Mammary epithelial cell (primary cell): ENCODE measurements at regions of chr17 and their contacts with region 1.

Region 1: DNA sequence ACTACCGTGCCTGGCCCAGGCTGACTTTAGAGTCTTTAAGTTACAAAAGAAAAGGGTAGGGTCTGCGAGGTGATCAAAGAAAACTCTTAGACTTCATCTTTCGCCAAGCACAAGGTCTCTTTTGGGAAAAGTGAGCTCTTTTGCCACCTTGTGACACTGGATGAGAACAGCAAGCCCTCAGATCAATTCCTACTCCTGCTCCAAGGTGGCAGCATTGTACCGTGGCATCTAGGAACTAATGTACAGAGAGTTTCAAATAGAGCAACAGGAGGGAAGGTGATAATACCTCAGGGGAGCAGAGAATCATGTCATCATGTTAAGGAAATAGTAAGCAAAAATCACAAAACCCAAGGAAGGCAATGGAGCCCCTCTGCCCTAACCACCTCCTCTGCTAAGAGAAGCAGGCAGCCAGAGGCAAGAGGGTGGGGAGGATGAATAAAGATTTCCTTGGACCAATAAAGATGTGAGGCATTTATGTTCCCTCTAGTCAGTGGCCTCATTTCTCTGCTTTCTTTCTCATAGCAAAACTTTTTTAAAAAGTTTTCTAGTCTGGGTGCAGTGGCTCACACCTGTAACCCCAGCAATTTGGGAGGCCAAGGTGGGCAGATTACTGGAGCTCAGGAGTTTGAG is 2.1 kb upstream of the C17orf78 start:
- DNase-seq: peak; percentile 78
- H3K4me3 ChIP-seq: no peak overlapping the region
- H3K27ac ChIP-seq: no peak overlapping the region
- H3K4me1 ChIP-seq: peaks cover 6% of the 10 kb centered on the region
- H3K27me3 ChIP-seq: no peaks in the 10 kb centered on the region
- CTCF ChIP-seq: peak; percentile 100

Region 2: DNA sequence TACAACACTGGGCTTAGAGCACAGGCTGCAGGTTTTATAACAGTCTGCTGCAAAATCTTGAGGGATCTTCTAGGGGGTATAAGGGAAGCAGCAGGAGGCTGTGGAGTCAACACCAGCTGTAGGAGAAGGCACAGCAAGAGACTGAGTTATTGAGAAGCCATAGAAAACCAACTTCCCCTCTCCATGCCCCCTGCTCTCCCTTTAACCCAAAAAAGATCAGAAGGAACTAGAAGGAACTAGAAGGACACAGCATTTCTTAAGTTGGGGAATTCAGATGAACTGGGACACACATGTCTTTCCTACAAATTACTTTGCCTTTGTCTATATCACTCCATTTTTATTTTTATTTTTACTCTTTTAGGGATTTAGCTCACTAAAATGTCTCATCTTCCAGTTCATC is 1315.7 kb before region 1 on chr17:
- CTCF ChIA-PET with region 1: no interaction called
- dilution Hi-C with region 1: no loop called
- in situ Hi-C with region 1: no loop called
- intact Hi-C with region 1: no loop called
- DNase-seq: no peak
- H3K4me3 ChIP-seq: no peak overlapping the region
- H3K27ac ChIP-seq: no peak overlapping the region
- H3K4me1 ChIP-seq: no peaks in the 10 kb centered on the region
- H3K27me3 ChIP-seq: no peaks in the 10 kb centered on the region
- CTCF ChIP-seq: no peak

Region 3: GRCh38 chr17:36601303-36602029 is 772.2 kb before region 1 on chr17 and contains the start of gene MRM1:
- CTCF ChIA-PET with region 1: no interaction called
- dilution Hi-C with region 1: no loop called
- in situ Hi-C with region 1: no loop called
- intact Hi-C with region 1: loop called (anchors 1 kb)
- DNase-seq: peak; percentile 89
- H3K4me3 ChIP-seq: peak within 1 kb of the TSS; percentile 73 to 90 (median 84)
- H3K27ac ChIP-seq: peak within 1 kb of the TSS; percentile 69
- H3K4me1 ChIP-seq: peaks cover 13% of the 10 kb centered on the region
- H3K27me3 ChIP-seq: no peaks in the 10 kb centered on the region
- CTCF ChIP-seq: peak in 1 of 2 donors; percentile 23
- total RNA-seq, gene MRM1: 4.3 to 10.1 TPM

Region 4: DNA sequence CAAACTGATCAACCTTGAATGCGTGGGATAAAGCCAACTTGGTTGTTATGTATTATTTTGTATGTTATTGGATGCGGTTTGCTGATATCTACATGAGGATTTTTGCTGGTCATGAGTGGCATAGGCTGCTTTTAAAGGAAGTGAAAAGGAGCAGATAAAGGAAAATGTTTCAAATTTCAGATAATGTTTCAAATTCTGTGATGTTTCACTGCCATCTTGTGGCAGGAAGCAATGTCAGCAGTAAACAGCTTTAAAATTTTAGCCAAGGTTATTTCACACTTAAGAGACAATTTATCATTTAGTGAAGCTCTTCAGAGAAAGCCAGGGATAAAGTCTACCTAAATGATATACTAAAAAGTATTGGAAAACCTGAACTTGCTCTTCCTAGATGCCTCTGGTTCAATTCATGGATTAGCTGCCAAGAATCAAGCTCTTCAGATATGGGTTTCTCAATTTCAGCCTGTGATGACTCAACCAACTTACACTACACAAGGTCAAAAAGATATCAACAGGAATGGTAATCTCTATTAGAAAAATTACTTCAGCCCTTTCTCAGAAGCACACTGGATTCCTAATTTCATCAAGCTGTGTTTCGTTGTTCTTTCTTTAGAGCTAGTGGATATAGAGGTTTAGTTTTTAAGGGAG is 133.8 kb before region 1 on chr17:
- CTCF ChIA-PET with region 1: interaction called, 7 read pairs
- dilution Hi-C with region 1: no loop called
- in situ Hi-C with region 1: no loop called
- intact Hi-C with region 1: loop called (anchors 5 kb)
- DNase-seq: no peak
- H3K4me3 ChIP-seq: no peak overlapping the region
- H3K27ac ChIP-seq: no peak overlapping the region
- H3K4me1 ChIP-seq: no peaks in the 10 kb centered on the region
- H3K27me3 ChIP-seq: no peaks in the 10 kb centered on the region
- CTCF ChIP-seq: peak; percentile 61 to 67

Region 5: DNA sequence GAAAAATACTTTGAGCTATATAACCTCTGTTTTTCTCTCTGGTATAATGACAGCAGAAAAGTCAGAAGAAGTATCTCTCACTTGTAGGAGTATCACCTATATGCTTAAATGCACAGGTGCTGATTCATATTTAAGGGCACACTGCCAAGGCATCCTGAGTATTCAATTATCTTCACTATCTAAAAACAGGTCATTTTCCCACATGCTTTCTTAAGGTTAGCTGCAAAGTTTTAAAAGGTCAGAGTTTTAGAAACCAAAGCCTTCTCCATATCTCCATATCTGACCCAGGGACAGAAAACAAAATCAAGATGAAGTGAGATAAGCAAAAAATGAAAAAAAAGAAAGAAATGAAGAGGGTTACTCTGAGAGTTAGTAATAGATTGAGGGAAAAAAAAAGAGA is 97.1 kb before region 1 on chr17:
- CTCF ChIA-PET with region 1: interaction called, 3 read pairs
- dilution Hi-C with region 1: no loop called
- in situ Hi-C with region 1: no loop called
- intact Hi-C with region 1: loop called (anchors 5 kb)
- DNase-seq: peak; percentile 66
- H3K4me3 ChIP-seq: no peak overlapping the region
- H3K27ac ChIP-seq: no peak overlapping the region
- H3K4me1 ChIP-seq: peaks cover 3% of the 10 kb centered on the region
- H3K27me3 ChIP-seq: no peaks in the 10 kb centered on the region
- CTCF ChIP-seq: no peak

Region 6: GRCh38 chr17:37388266-37388665 is 14.6 kb after region 1 on chr17:
- CTCF ChIA-PET with region 1: no interaction called
- dilution Hi-C with region 1: no loop called
- in situ Hi-C with region 1: no loop called
- intact Hi-C with region 1: no loop called
- DNase-seq: peak; percentile 40
- H3K4me3 ChIP-seq: no peak overlapping the region
- H3K27ac ChIP-seq: no peak overlapping the region
- H3K4me1 ChIP-seq: no peaks in the 10 kb centered on the region
- H3K27me3 ChIP-seq: no peaks in the 10 kb centered on the region
- CTCF ChIP-seq: no peak

Region 7: DNA sequence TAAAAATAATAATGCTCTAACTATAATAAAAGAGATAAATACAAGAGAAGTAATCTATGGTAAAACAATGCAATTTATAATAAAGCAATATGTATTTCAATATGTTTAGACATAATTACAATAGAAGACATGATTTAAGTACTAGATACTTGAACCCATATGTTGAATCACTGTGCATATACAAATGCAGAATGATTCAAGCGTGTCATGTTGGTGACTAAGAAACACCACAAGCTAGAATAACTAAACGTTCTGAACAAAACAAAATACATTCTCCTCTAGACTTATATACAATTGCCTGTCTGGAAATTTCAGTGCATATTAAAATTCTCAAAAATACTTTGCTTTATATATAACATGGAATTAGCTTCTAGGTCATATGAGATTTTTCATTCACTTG is 44.2 kb after region 1 on chr17:
- CTCF ChIA-PET with region 1: no interaction called
- dilution Hi-C with region 1: no loop called
- in situ Hi-C with region 1: no loop called
- intact Hi-C with region 1: no loop called
- DNase-seq: no peak
- H3K4me3 ChIP-seq: no peak overlapping the region
- H3K27ac ChIP-seq: no peak overlapping the region
- H3K4me1 ChIP-seq: no peaks in the 10 kb centered on the region
- H3K27me3 ChIP-seq: no peaks in the 10 kb centered on the region
- CTCF ChIP-seq: no peak

Region 8: DNA sequence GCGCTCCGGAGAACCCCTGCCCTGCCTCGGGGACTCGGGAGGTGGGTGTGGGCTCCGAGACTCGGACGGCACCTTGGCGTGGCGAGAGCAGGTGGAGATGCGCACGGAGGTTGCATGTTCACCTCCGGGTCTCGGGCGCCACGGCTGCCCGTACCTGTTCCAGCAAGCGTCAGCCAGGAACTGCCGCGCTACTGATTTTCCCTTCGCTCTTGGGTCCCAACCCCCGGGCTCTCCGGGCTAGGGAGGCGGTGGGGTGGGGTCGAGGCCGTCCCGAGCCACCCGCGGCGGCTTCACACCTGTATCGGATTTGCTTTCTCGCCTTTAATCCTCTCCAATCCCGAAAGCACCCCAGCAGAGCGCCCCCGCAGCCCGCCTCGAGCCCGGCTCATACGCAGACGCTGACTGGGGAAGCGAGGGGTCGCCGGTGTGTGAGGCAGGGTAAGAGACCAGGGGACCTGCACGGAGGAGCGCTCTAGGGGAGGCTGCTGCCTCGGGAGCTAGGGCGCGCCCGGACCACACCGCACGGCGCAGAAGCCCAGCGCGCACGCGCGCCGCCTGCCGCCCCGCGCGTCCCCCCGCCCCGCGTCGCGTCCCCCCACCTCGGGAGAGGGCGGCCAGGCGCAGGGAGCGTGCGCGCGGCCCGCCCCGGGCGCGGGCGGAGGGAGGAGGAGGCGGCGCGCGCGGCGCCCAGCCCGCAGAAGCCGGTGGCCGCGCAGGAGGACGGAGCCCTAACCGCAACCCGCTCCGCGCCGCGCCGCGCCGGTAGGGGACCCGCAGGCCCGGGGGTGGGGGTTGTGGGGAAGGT is 115.8 kb after region 1 on chr17 and contains the start of gene DUSP14:
- CTCF ChIA-PET with region 1: interaction called, 3 read pairs
- dilution Hi-C with region 1: no loop called
- in situ Hi-C with region 1: no loop called
- intact Hi-C with region 1: loop called (anchors 2 kb)
- DNase-seq: peak; percentile 70
- H3K4me3 ChIP-seq: peak within 1 kb of the TSS; percentile 82 to 86 (median 82)
- H3K27ac ChIP-seq: peak within 1 kb of the TSS; percentile 95
- H3K4me1 ChIP-seq: peaks cover 24% of the 10 kb centered on the region
- H3K27me3 ChIP-seq: no peaks in the 10 kb centered on the region
- CTCF ChIP-seq: peak in 1 of 2 donors; percentile 5
- total RNA-seq, gene DUSP14: 121 to 148 TPM

Region 9: DNA sequence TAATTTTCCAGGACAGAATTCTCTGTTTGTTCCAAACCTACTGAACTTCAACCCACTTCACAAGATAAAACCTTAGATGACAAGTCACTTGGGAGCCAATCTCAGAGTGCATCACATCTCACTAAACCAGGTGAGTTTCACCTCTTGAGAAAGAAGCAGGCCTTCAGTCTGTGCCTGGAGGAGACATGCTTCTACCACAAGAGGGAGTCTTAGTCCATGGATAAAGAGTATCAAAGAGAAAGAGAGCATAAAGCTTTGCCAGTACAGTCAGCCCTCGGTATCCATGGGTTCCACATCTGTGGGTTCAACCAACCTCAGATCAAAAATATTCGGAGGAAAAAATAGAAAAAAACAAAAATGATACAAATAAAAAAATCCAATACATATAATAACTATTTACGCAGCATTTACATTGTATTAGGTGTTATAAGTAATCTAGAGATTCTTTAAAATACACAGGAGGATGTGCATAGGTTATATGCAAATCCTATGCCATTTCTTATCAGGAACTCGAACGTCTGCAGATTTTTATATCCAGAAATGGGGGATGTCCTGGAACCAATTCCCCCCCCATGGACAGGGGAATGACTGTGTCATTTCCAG is 153.7 kb after region 1 on chr17:
- CTCF ChIA-PET with region 1: interaction called, 13 read pairs
- dilution Hi-C with region 1: no loop called
- in situ Hi-C with region 1: loop called in 1 of 2 experiments (anchors 25 kb)
- intact Hi-C with region 1: loop called (anchors 1 kb)
- DNase-seq: peak; percentile 66
- H3K4me3 ChIP-seq: no peak overlapping the region
- H3K27ac ChIP-seq: no peak overlapping the region
- H3K4me1 ChIP-seq: no peaks in the 10 kb centered on the region
- H3K27me3 ChIP-seq: no peaks in the 10 kb centered on the region
- CTCF ChIP-seq: peak; percentile 82 to 84

Region 10: DNA sequence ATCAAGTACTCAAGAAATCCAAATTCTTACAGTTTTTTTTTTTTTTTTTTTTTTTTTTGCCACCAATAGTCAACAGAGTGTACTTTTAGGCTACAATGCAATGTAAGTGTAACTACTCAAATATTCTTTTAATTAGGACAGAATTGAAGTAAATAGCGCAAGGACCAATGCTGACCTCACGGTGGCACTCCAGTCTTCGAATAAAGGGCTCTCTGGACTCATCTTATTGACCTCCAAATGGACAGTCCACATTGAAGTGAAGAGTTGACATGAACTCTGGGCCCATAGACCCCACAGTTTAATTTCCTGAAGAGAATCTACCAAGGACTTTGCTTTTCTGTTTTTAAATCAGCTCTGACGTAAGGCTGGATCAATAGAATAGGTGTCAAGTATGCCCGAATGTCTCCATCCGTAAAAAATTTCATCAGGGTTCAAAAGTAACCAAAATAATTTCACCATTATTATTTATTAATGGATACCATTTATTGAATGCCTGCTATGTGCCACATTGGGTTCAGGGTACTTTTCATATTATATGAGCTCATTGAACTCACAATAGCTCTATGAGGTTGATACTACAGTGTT is 276.9 kb after region 1 on chr17:
- CTCF ChIA-PET with region 1: interaction called, 24 read pairs
- dilution Hi-C with region 1: no loop called
- in situ Hi-C with region 1: no loop called
- intact Hi-C with region 1: no loop called
- DNase-seq: peak; percentile 30
- H3K4me3 ChIP-seq: no peak overlapping the region
- H3K27ac ChIP-seq: no peak overlapping the region
- H3K4me1 ChIP-seq: peaks cover 3% of the 10 kb centered on the region
- H3K27me3 ChIP-seq: no peaks in the 10 kb centered on the region
- CTCF ChIP-seq: peak; percentile 55 to 67